B cell (primary cell): ENCODE measurements at regions of chr6 and their contacts with region 1.

Region 1: GRCh38 chr6:129490521-129491245 is 219.3 kb downstream of the ARHGAP18 start:
- DNase-seq: peak; percentile 82
- ATAC-seq: peak; percentile 92
- H3K4me3 ChIP-seq: peak overlapping the region; percentile 35 to 68 (median 54)
- H3K4me3 Mint-ChIP-seq: peak overlapping the region; percentile 79
- H3K27ac ChIP-seq: peak overlapping the region; percentile 80 to 89
- H3K27ac Mint-ChIP-seq: peak overlapping the region; percentile 95
- H3K4me1 ChIP-seq: peaks cover 18 to 21% of the 10 kb centered on the region in 2 donors
- H3K4me1 Mint-ChIP-seq: peaks cover 20% of the 10 kb centered on the region
- H3K27me3 ChIP-seq: no peaks in the 10 kb centered on the region
- H3K27me3 Mint-ChIP-seq: no peaks in the 10 kb centered on the region
- CTCF ChIP-seq: no peak

Region 2: GRCh38 chr6:129393654-129394053 is 97.0 kb before region 1 on chr6:
- CTCF ChIA-PET with region 1: no interaction called
- POLR2A ChIA-PET with region 1: no interaction called
- intact Hi-C with region 1: loop called (anchors 5 kb)
- DNase-seq: peak; percentile 59
- ATAC-seq: peak; percentile 87
- H3K4me3 ChIP-seq: no peak overlapping the region
- H3K4me3 Mint-ChIP-seq: peak overlapping the region; percentile 14
- H3K27ac ChIP-seq: no peak overlapping the region
- H3K27ac Mint-ChIP-seq: peak overlapping the region; percentile 1
- H3K4me1 ChIP-seq: peaks cover 14 to 19% of the 10 kb centered on the region in 2 donors
- H3K4me1 Mint-ChIP-seq: peaks cover 18% of the 10 kb centered on the region
- H3K27me3 ChIP-seq: no peaks in the 10 kb centered on the region
- H3K27me3 Mint-ChIP-seq: no peaks in the 10 kb centered on the region
- CTCF ChIP-seq: no peak

Region 3: DNA sequence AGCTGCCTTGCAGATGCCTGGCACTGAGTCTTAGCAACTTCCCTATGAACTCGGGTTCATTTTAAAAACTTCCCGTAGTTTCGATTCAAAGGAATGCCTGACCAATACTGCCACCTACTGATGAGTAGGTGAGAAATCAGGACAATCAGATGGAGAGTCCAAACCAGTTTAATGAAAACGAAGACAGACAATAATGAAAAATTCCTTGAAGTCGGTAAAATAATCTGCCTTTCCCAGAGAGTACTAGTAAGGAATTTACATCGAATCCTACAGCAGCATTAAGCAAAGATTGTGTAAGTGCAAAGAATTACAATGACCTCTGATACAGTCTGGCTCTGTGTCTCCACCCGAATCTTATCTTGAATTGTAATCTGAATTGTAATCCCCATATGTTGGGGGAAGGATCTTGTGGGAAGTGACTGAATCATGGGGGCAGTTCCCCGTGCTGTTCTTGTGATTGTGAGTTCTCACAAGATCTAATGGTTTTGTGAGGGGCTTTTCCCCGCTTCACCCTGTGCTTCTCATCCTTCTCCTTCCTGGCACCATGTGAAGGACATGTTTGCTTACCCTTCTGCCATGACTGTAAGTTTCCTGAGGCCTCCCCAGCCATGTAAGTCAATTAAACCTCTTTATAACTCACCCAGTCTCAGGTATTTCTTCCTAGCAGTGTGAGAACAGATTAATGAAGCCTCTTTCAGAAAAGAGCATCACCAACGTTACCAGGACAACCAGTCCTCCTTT is 84.9 kb after region 1 on chr6:
- CTCF ChIA-PET with region 1: no interaction called
- POLR2A ChIA-PET with region 1: no interaction called
- intact Hi-C with region 1: no loop called
- DNase-seq: peak; percentile 21
- ATAC-seq: peak; percentile 21
- H3K4me3 ChIP-seq: no peak overlapping the region
- H3K4me3 Mint-ChIP-seq: no peak overlapping the region
- H3K27ac ChIP-seq: no peak overlapping the region
- H3K27ac Mint-ChIP-seq: no peak overlapping the region
- H3K4me1 ChIP-seq: peaks cover 0 to 6% of the 10 kb centered on the region in 2 donors
- H3K4me1 Mint-ChIP-seq: peaks cover 8% of the 10 kb centered on the region
- H3K27me3 ChIP-seq: no peaks in the 10 kb centered on the region
- H3K27me3 Mint-ChIP-seq: no peaks in the 10 kb centered on the region
- CTCF ChIP-seq: peak; percentile 53